Activated CD4-positive, alpha-beta memory T cell treated with anti-CD3 and anti-CD28 coated beads for 36 hours (primary cell): ENCODE measurements at regions of chr6 and their contacts with region 1.

Region 1: GRCh38 chr6:35240840-35241801 is 18.4 kb upstream of the ZNF76 start:
- DNase-seq: peak; percentile 84
- H3K4me3 Mint-ChIP-seq: no peak overlapping the region
- H3K27ac Mint-ChIP-seq: no peak overlapping the region
- H3K4me1 Mint-ChIP-seq: no peaks in the 10 kb centered on the region
- H3K27me3 Mint-ChIP-seq: no peaks in the 10 kb centered on the region

Region 2: DNA sequence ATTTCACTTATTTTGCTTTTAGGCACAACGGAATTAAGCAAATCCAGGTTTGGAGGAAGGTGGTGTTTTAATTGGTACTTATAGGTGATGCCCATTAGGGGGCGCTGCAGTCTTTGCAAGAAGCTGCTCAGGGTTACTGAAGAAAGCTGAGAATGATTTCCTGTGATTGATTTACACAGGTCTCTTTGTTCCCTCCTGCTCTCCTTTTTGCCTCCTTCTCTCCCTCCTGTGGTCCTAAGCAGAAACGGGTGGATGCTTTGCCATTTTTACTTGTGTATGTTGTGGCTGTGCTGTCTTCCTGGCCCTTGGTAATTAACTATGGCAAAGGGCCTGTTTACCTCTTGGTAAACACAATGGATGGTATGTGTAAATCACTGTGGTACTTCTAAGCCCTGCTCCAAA is 254.3 kb before region 1 on chr6:
- CTCF ChIA-PET with region 1: interaction called, 58 read pairs
- POLR2A ChIA-PET with region 1: no interaction called
- intact Hi-C with region 1: loop called (anchors 2 kb)
- DNase-seq: peak; percentile 68
- H3K4me3 Mint-ChIP-seq: no peak overlapping the region
- H3K27ac Mint-ChIP-seq: no peak overlapping the region
- H3K4me1 Mint-ChIP-seq: no peaks in the 10 kb centered on the region
- H3K27me3 Mint-ChIP-seq: no peaks in the 10 kb centered on the region

Region 3: DNA sequence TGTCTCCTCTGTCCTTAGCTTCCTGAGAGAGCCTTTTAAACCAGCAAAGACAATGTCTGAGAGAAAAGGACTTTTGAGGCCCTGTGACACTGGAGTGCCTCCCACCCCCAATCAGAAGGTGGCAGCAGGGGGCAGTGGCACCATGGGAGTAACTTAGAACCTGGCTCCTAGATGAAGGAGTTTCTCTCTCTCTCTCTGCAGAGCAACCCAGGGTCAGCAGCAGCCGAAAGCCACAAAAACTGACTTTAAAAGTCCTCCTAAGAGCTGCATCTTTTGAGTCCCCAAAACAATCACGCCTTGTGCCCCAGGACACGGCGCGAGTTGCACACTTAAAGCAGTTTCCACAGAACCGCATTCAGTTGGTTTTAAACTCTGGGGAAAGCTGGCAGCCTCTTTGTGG is 94.7 kb before region 1 on chr6:
- CTCF ChIA-PET with region 1: interaction called, 54 read pairs
- POLR2A ChIA-PET with region 1: no interaction called
- intact Hi-C with region 1: loop called (anchors 1 kb)
- DNase-seq: peak; percentile 65
- H3K4me3 Mint-ChIP-seq: no peak overlapping the region
- H3K27ac Mint-ChIP-seq: no peak overlapping the region
- H3K4me1 Mint-ChIP-seq: peaks cover 25% of the 10 kb centered on the region
- H3K27me3 Mint-ChIP-seq: peaks cover 5% of the 10 kb centered on the region

Region 4: GRCh38 chr6:35202066-35202546 is 39.0 kb before region 1 on chr6:
- CTCF ChIA-PET with region 1: interaction called, 34 read pairs
- POLR2A ChIA-PET with region 1: no interaction called
- intact Hi-C with region 1: no loop called
- DNase-seq: no peak
- H3K4me3 Mint-ChIP-seq: no peak overlapping the region
- H3K27ac Mint-ChIP-seq: no peak overlapping the region
- H3K4me1 Mint-ChIP-seq: no peaks in the 10 kb centered on the region
- H3K27me3 Mint-ChIP-seq: peaks cover 25% of the 10 kb centered on the region

Region 5: GRCh38 chr6:35230950-35231349 is 10.2 kb before region 1 on chr6:
- CTCF ChIA-PET with region 1: interaction called, 28 read pairs
- POLR2A ChIA-PET with region 1: no interaction called
- intact Hi-C with region 1: no loop called
- DNase-seq: no peak
- H3K4me3 Mint-ChIP-seq: no peak overlapping the region
- H3K27ac Mint-ChIP-seq: no peak overlapping the region
- H3K4me1 Mint-ChIP-seq: no peaks in the 10 kb centered on the region
- H3K27me3 Mint-ChIP-seq: no peaks in the 10 kb centered on the region